ENCODE measurements at regions of chr17 and their contacts with region 1.

Region 1: GRCh38 chr17:61366715-61367413 is 32.8 kb upstream of the TBX2 start:
- DNase-seq: peak; percentile 96
- ATAC-seq: peak; percentile 75
- H3K4me3 ChIP-seq: peak overlapping the region in 1 of 3 experiments; percentile 39; a peak in 2 of 6 replicates
- H3K27ac ChIP-seq: peak overlapping the region; percentile 89
- H3K4me1 ChIP-seq: peaks cover 85% of the 10 kb centered on the region
- H3K27me3 ChIP-seq: no peaks in the 10 kb centered on the region
- CTCF ChIP-seq: no peak
- EP300 ChIP-seq: peak; percentile 54 to 80; a peak in 1 of 4 replicates
- POLR2A ChIP-seq: 0 out of 4 replicates have a peak, but pooled peaks of 1 of the 2 experiments have one; percentile 23
- RAD21 ChIP-seq: no peak; the same call in 1 of the 2 replicates

Region 2: GRCh38 chr17:61354895-61355874 is 11.7 kb before region 1 on chr17:
- CTCF ChIA-PET with region 1: no interaction called
- POLR2A ChIA-PET with region 1: interaction called, 39 read pairs
- in situ Hi-C with region 1: no loop called
- intact Hi-C with region 1: loop called (anchors 1 kb)
- DNase-seq: no peak
- ATAC-seq: peak; percentile 23; the same call in 1 of the 3 replicates
- H3K4me3 ChIP-seq: no peak overlapping the region
- H3K27ac ChIP-seq: no peak overlapping the region
- H3K4me1 ChIP-seq: peaks cover 87% of the 10 kb centered on the region
- H3K27me3 ChIP-seq: no peaks in the 10 kb centered on the region
- CTCF ChIP-seq: peak; percentile 48
- EP300 ChIP-seq: no peak
- POLR2A ChIP-seq: no peak
- RAD21 ChIP-seq: no peak

Region 3: DNA sequence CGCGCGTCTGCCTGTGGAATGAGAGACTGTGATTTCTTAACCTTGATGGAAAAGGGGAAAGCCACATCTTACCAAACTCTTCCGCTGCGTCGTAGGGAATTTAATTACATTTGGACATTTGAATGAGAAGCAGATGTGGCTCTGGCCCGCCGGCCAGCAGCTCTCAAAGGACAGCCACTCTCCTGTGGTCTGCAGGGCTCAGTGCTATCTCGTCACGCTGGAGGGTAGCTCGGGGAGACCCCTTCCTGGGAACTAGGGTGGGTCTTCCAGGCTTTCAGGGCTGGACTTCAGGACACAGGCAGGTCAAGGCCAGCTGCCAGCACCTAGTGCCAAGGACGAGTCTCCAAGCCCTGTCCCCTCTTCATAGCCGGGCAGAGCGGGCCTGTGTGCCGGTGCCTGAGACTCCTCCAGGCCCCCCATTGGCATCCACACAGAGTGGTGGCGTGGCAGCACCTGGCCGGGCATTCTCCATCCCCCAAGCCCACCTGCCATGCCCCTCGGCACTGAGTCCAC is 16.9 kb after region 1 on chr17:
- CTCF ChIA-PET with region 1: no interaction called
- POLR2A ChIA-PET with region 1: interaction called, 14 read pairs
- in situ Hi-C with region 1: no loop called
- intact Hi-C with region 1: loop called (anchors 1 kb)
- DNase-seq: no peak
- ATAC-seq: no peak
- H3K4me3 ChIP-seq: no peak overlapping the region
- H3K27ac ChIP-seq: no peak overlapping the region
- H3K4me1 ChIP-seq: peaks cover 55% of the 10 kb centered on the region
- H3K27me3 ChIP-seq: no peaks in the 10 kb centered on the region
- CTCF ChIP-seq: no peak
- EP300 ChIP-seq: no peak
- POLR2A ChIP-seq: no peak
- RAD21 ChIP-seq: no peak